WTC11 (cell line): ENCODE measurements at regions of chr9 and their contacts with region 1.

Region 1: DNA sequence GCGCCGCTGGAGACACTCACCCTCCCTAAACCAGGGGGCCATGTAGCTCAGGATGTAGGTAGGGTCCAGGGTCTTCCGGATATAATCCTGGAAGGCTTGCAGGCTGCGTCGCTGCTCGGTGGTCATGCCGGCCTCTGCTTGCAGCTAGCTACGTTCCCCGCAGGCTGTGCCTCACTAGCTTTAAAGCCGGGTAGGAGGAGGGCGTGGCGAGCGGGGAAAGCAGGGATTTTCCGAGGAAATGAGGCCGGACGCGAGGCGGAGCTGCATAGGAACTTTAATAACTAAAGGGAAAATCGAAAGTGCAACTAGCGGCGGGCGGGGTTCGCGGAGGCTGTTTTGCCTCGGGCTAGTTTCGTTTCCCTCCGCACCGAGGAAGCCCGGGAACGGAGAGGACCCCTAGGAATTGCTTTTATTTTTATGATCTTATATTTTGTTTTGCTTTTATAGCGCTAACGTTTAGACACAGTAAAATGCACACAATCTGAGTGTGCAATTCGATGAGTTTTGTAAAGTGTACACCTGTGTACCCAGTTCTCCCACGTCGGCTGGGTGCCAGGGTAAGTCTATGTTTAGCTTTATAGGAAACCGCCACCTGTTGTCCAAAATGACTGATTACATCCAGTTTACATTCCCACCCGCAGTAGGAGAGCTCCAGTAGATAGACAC is at the start of gene RIGI:
- DNase-seq: peak; percentile 83
- ATAC-seq: peak; percentile 84
- H3K4me3 Mint-ChIP-seq: peak within 1 kb of the TSS; percentile 82
- H3K27ac Mint-ChIP-seq: peak within 1 kb of the TSS; percentile 97
- H3K4me1 Mint-ChIP-seq: peaks cover 14% of the 10 kb centered on the region
- H3K27me3 Mint-ChIP-seq: no peaks in the 10 kb centered on the region
- CTCF ChIP-seq: peak; percentile 41; the same call in 1 of the 2 replicates
- total RNA-seq, gene RIGI: 6.0 to 7.5 TPM (median 6.2 TPM) in 3 replicates

Region 2: GRCh38 chr9:32431940-32432555 is 94.1 kb before region 1 on chr9:
- CTCF ChIA-PET with region 1: interaction called, 12 read pairs
- POLR2A ChIA-PET with region 1: no interaction called
- DNase-seq: peak; percentile 51
- ATAC-seq: peak; percentile 81
- H3K4me3 Mint-ChIP-seq: no peak overlapping the region
- H3K27ac Mint-ChIP-seq: no peak overlapping the region
- H3K4me1 Mint-ChIP-seq: no peaks in the 10 kb centered on the region
- H3K27me3 Mint-ChIP-seq: no peaks in the 10 kb centered on the region
- CTCF ChIP-seq: peak; percentile 65

Region 3: DNA sequence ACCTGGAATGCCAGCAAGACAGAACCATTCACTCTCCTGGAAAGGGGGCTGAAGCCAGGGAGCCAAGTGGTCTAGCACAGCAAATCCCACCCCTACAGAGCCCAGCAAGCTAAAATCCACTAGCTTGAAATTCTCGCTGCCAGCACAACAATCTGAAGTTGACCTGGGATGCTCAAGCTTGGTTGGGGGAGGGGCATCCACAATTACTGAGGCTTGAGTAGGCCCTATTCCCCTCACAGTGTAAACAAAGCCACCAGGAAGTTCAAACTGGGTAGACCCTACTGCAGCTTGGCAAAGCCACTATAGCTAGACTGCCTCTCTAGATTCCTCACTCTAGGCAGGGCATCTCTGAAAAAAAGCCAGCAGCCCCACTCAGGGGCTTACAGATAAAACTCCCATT is 17.4 kb before region 1 on chr9:
- CTCF ChIA-PET with region 1: interaction called, 26 read pairs
- POLR2A ChIA-PET with region 1: interaction called, 3 read pairs
- DNase-seq: no peak
- ATAC-seq: peak; percentile 84
- H3K4me3 Mint-ChIP-seq: no peak overlapping the region
- H3K27ac Mint-ChIP-seq: no peak overlapping the region
- H3K4me1 Mint-ChIP-seq: peaks cover 13% of the 10 kb centered on the region
- H3K27me3 Mint-ChIP-seq: no peaks in the 10 kb centered on the region
- CTCF ChIP-seq: no peak

Region 4: DNA sequence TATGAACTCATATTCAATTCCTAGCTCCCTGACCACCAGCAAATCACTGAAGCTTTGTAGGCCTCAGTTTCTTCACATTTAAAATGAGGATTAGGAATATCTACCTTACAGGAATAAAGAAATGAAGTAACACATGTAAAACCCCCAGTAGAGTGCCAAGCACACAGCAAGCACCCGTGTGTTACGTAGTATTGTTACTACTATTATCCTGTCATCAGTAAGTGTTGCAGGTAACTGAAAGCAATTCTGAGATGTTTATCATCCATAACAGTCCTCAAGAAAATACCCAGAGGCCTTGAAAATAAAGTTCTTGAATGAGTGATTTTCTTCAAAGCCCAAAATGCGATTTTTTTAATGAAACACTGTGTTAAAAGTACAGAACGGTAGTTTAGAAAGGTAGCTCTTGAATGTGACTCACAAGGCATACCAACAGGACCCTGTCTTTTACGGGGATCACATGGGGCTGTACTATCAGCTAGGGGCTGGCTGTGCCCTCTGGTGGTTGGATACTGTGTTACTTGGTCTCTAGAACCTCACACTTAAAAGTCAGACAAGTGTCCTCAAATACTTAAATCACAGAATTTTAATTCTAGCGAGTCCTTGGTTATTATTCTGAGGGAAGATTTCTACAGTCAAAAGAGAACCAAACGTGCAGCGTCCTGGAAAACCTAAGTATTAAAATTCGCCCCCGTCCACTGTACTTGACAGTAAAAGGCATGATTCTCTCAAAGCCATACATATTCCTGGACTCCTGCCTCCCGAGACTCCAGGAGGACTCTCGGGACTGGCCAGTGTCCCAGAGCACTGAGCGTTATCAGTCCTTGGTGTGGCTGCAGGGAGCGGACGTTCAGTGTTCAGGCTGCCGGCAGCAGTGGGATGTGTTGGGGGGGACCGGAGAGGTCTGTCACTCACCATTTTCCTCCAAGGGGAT is 46.1 kb after region 1 on chr9:
- CTCF ChIA-PET with region 1: interaction called, 22 read pairs
- POLR2A ChIA-PET with region 1: interaction called, 4 read pairs
- DNase-seq: peak; percentile 68
- ATAC-seq: peak; percentile 89
- H3K4me3 Mint-ChIP-seq: peak overlapping the region; percentile 99
- H3K27ac Mint-ChIP-seq: peak overlapping the region; percentile 99
- H3K4me1 Mint-ChIP-seq: peaks cover 11% of the 10 kb centered on the region
- H3K27me3 Mint-ChIP-seq: no peaks in the 10 kb centered on the region
- CTCF ChIP-seq: peak; percentile 18; the same call in 1 of the 2 replicates

Region 5: DNA sequence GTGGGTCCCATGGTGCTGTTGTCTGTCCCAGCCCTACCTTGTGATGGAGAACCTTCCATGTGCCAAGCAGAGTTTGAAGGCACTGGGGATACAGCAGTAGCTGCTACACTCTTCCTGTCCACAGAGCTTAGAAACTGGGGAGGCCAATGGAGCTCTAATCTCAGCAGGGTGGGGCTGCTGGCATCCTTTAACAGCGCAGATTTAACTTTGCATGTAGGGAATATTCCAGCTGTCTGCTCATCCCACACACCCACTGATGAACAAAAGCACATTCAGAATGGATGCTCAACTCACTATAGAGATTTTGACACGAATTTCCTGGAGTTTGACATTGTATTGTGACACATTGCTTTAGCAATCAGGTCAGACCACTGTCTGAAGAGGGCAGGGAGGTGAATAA is 306.2 kb after region 1 on chr9:
- CTCF ChIA-PET with region 1: no interaction called
- POLR2A ChIA-PET with region 1: no interaction called
- DNase-seq: no peak
- ATAC-seq: no peak
- H3K4me3 Mint-ChIP-seq: no peak overlapping the region
- H3K27ac Mint-ChIP-seq: no peak overlapping the region
- H3K4me1 Mint-ChIP-seq: peaks cover 19% of the 10 kb centered on the region
- H3K27me3 Mint-ChIP-seq: peaks cover 10% of the 10 kb centered on the region
- CTCF ChIP-seq: no peak